Activated CD4-positive, alpha-beta memory T cell treated with anti-CD3 and anti-CD28 coated beads for 36 hours (primary cell): ENCODE measurements at regions of chr1 and their contacts with region 1.

Region 1: GRCh38 chr1:226687426-226687825 is 51.7 kb downstream of the ITPKB start:
- DNase-seq: peak; percentile 78
- H3K4me3 Mint-ChIP-seq: no peak overlapping the region
- H3K27ac Mint-ChIP-seq: peak overlapping the region; percentile 85
- H3K4me1 Mint-ChIP-seq: peaks cover 99% of the 10 kb centered on the region
- H3K27me3 Mint-ChIP-seq: no peaks in the 10 kb centered on the region

Region 2: GRCh38 chr1:226417830-226418546 is 269.4 kb before region 1 on chr1:
- CTCF ChIA-PET with region 1: no interaction called
- POLR2A ChIA-PET with region 1: no interaction called
- intact Hi-C with region 1: no loop called
- DNase-seq: no peak
- H3K4me3 Mint-ChIP-seq: no peak overlapping the region
- H3K27ac Mint-ChIP-seq: no peak overlapping the region
- H3K4me1 Mint-ChIP-seq: no peaks in the 10 kb centered on the region
- H3K27me3 Mint-ChIP-seq: peaks cover 2% of the 10 kb centered on the region

Region 3: GRCh38 chr1:226634166-226634588 is 53.2 kb before region 1 on chr1:
- CTCF ChIA-PET with region 1: interaction called, 120 read pairs
- POLR2A ChIA-PET with region 1: interaction called, 3 read pairs
- intact Hi-C with region 1: loop called (anchors 1 kb)
- DNase-seq: peak; percentile 86
- H3K4me3 Mint-ChIP-seq: no peak overlapping the region
- H3K27ac Mint-ChIP-seq: peak overlapping the region; percentile 11
- H3K4me1 Mint-ChIP-seq: peaks cover 57% of the 10 kb centered on the region
- H3K27me3 Mint-ChIP-seq: no peaks in the 10 kb centered on the region

Region 4: GRCh38 chr1:226650236-226650841 is 37.1 kb before region 1 on chr1:
- CTCF ChIA-PET with region 1: interaction called, 35 read pairs
- POLR2A ChIA-PET with region 1: interaction called, 8 read pairs
- intact Hi-C with region 1: loop called (anchors 2 kb)
- DNase-seq: no peak
- H3K4me3 Mint-ChIP-seq: no peak overlapping the region
- H3K27ac Mint-ChIP-seq: peak overlapping the region; percentile 31
- H3K4me1 Mint-ChIP-seq: peaks cover 41% of the 10 kb centered on the region
- H3K27me3 Mint-ChIP-seq: no peaks in the 10 kb centered on the region

Region 5: GRCh38 chr1:226662642-226663326 is 24.6 kb before region 1 on chr1:
- CTCF ChIA-PET with region 1: interaction called, 43 read pairs
- POLR2A ChIA-PET with region 1: interaction called, 15 read pairs
- intact Hi-C with region 1: loop called (anchors 1 kb)
- DNase-seq: peak; percentile 94
- H3K4me3 Mint-ChIP-seq: peak overlapping the region; percentile 58
- H3K27ac Mint-ChIP-seq: no peak overlapping the region
- H3K4me1 Mint-ChIP-seq: peaks cover 90% of the 10 kb centered on the region
- H3K27me3 Mint-ChIP-seq: no peaks in the 10 kb centered on the region

Region 6: GRCh38 chr1:226731257-226731893 is 43.9 kb after region 1 on chr1:
- CTCF ChIA-PET with region 1: interaction called, 5 read pairs
- POLR2A ChIA-PET with region 1: interaction called, 3 read pairs
- intact Hi-C with region 1: loop called (anchors 1 kb)
- DNase-seq: peak; percentile 32
- H3K4me3 Mint-ChIP-seq: peak overlapping the region; percentile 71
- H3K27ac Mint-ChIP-seq: peak overlapping the region; percentile 87
- H3K4me1 Mint-ChIP-seq: peaks cover 86% of the 10 kb centered on the region
- H3K27me3 Mint-ChIP-seq: no peaks in the 10 kb centered on the region

Region 7: DNA sequence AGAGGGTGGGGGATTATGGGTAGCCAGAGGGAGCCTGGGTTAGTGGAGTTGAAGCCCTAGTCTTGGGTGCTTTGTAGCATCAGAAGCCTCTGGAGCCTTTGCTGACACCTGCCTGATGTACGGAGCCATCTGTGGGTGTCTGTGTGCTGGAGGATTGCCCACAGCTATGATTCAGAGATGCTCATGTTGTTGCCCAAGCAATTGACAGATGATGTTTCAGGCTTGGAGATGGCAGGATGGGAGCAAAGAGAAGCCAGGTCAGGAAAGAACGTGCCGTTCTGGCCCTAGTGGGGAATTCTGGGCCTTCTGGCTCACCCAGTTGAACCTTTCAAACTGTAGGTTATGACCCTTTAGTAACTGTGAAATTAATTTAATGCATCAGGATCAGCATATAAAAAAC is 280.2 kb after region 1 on chr1:
- CTCF ChIA-PET with region 1: no interaction called
- POLR2A ChIA-PET with region 1: no interaction called
- intact Hi-C with region 1: no loop called
- DNase-seq: no peak
- H3K4me3 Mint-ChIP-seq: no peak overlapping the region
- H3K27ac Mint-ChIP-seq: no peak overlapping the region
- H3K4me1 Mint-ChIP-seq: peaks cover 6% of the 10 kb centered on the region
- H3K27me3 Mint-ChIP-seq: no peaks in the 10 kb centered on the region